B cell (primary cell): ENCODE measurements at regions of chr12 and their contacts with region 1.

Region 1: GRCh38 chr12:62259993-62260732 is at the start of gene USP15:
- DNase-seq: peak; percentile 98
- ATAC-seq: peak; percentile 82
- H3K4me3 ChIP-seq: peak within 1 kb of the TSS; percentile 81 to 99 (median 97)
- H3K4me3 Mint-ChIP-seq: peak within 1 kb of the TSS; percentile 96
- H3K27ac ChIP-seq: peak within 1 kb of the TSS; percentile 96
- H3K27ac Mint-ChIP-seq: peak within 1 kb of the TSS; percentile 98
- H3K4me1 ChIP-seq: peaks cover 34 to 44% of the 10 kb centered on the region in 2 donors
- H3K4me1 Mint-ChIP-seq: peaks cover 50% of the 10 kb centered on the region
- H3K27me3 ChIP-seq: no peaks in the 10 kb centered on the region
- H3K27me3 Mint-ChIP-seq: no peaks in the 10 kb centered on the region
- CTCF ChIP-seq: peak; percentile 61
- total RNA-seq, gene USP15: 171 and 182 TPM in 2 replicates

Region 2: GRCh38 chr12:62301080-62301798 is 41.1 kb after region 1 on chr12:
- CTCF ChIA-PET with region 1: no interaction called
- POLR2A ChIA-PET with region 1: interaction called, 3 read pairs
- intact Hi-C with region 1: loop called (anchors 5 kb)
- DNase-seq: no peak
- ATAC-seq: no peak
- H3K4me3 ChIP-seq: no peak overlapping the region
- H3K4me3 Mint-ChIP-seq: no peak overlapping the region
- H3K27ac ChIP-seq: no peak overlapping the region
- H3K27ac Mint-ChIP-seq: no peak overlapping the region
- H3K4me1 ChIP-seq: no peaks in the 10 kb centered on the region
- H3K4me1 Mint-ChIP-seq: peaks cover 41% of the 10 kb centered on the region
- H3K27me3 ChIP-seq: no peaks in the 10 kb centered on the region
- H3K27me3 Mint-ChIP-seq: no peaks in the 10 kb centered on the region
- CTCF ChIP-seq: no peak

Region 3: DNA sequence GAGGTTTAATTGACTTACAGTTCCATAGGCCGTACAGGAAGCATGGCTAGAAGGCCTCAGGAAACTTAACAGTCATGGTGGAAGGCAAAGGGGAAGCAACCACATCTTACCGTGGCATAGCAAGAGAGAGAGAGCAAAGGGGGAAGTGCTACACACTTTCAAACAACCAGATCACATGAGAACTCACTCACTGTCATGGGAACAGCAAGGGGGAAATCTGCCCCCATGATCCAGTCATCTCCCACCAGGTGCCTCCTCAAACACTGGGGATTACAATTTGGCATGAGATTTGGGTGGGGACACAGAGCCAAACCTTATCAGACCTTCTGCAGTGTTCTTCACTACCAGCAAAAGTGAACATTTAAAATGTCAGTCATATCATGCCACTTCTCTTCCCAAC is 58.9 kb after region 1 on chr12:
- CTCF ChIA-PET with region 1: no interaction called
- POLR2A ChIA-PET with region 1: no interaction called
- intact Hi-C with region 1: loop called (anchors 5 kb)
- DNase-seq: peak; percentile 44
- ATAC-seq: no peak
- H3K4me3 ChIP-seq: no peak overlapping the region
- H3K4me3 Mint-ChIP-seq: no peak overlapping the region
- H3K27ac ChIP-seq: peak overlapping the region in 1 of 2 donors; percentile 59
- H3K27ac Mint-ChIP-seq: peak overlapping the region; percentile 28
- H3K4me1 ChIP-seq: peaks cover 0 to 4% of the 10 kb centered on the region in 2 donors
- H3K4me1 Mint-ChIP-seq: peaks cover 28% of the 10 kb centered on the region
- H3K27me3 ChIP-seq: no peaks in the 10 kb centered on the region
- H3K27me3 Mint-ChIP-seq: no peaks in the 10 kb centered on the region
- CTCF ChIP-seq: no peak

Region 4: GRCh38 chr12:62351326-62351725 is 91.2 kb after region 1 on chr12:
- CTCF ChIA-PET with region 1: interaction called, 3 read pairs
- POLR2A ChIA-PET with region 1: no interaction called
- intact Hi-C with region 1: loop called (anchors 10 kb)
- DNase-seq: no peak
- ATAC-seq: no peak
- H3K4me3 ChIP-seq: no peak overlapping the region
- H3K4me3 Mint-ChIP-seq: no peak overlapping the region
- H3K27ac ChIP-seq: no peak overlapping the region
- H3K27ac Mint-ChIP-seq: no peak overlapping the region
- H3K4me1 ChIP-seq: no peaks in the 10 kb centered on the region
- H3K4me1 Mint-ChIP-seq: peaks cover 4% of the 10 kb centered on the region
- H3K27me3 ChIP-seq: no peaks in the 10 kb centered on the region
- H3K27me3 Mint-ChIP-seq: no peaks in the 10 kb centered on the region
- CTCF ChIP-seq: no peak

Region 5: DNA sequence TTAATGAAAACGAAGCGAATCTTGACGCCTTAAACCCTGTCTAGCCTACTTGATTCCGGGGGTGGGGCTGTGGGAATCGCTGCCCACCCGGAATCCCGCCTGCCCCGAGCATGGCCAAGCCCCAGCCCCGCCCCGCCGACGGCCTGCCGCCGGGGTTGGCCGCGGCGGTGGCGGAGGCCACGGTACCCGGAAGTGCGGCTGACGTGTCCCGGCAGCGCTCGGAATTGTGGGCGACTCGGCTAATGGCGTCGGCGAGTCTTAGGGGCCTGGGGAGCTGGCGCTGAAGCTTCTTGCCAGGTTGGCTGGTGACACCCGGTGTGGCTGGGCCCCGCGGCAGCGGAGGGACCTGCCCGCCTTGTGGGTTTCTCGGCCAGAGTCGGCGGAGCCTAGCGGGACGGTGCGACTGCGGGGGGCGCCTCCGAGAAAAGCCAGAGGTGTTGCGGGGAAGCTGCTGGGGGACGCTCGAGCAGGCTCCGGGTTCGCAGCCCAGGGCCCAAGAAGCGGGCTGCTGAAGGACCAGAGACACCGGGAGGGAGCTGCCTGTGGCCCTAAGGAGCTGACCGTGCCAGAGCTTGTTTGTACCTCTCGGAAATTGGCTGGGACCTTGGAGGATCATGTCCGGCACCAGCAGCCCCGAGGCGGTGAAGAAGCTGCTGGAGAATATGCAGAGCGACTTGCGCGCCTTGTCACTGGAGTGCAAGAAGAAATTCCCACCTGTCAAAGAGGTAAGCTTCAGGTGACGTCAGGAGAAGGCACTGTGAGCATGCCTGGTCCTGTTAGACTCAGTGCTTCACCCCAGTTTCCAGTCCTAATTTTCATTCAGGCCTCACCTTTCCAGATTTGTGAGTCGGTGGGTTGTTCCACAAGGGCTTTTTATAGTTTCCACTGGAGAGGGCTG is 206.7 kb after region 1 on chr12 and contains the start of gene MON2:
- CTCF ChIA-PET with region 1: interaction called, 3 read pairs
- POLR2A ChIA-PET with region 1: interaction called, 3 read pairs
- intact Hi-C with region 1: loop called (anchors 1 kb)
- DNase-seq: peak; percentile 90
- ATAC-seq: peak; percentile 97
- H3K4me3 ChIP-seq: peak within 1 kb of the TSS; percentile 70 to 95 (median 91)
- H3K4me3 Mint-ChIP-seq: peak within 1 kb of the TSS; percentile 97
- H3K27ac ChIP-seq: peak within 1 kb of the TSS; percentile 91 to 93
- H3K27ac Mint-ChIP-seq: peak within 1 kb of the TSS; percentile 86
- H3K4me1 ChIP-seq: peaks cover 23 to 25% of the 10 kb centered on the region in 2 donors
- H3K4me1 Mint-ChIP-seq: peaks cover 27% of the 10 kb centered on the region
- H3K27me3 ChIP-seq: no peaks in the 10 kb centered on the region
- H3K27me3 Mint-ChIP-seq: no peaks in the 10 kb centered on the region
- CTCF ChIP-seq: no peak
- total RNA-seq, gene MON2: 104 and 118 TPM in 2 replicates

Region 6: GRCh38 chr12:62793256-62794217 is 533.4 kb after region 1 on chr12:
- CTCF ChIA-PET with region 1: interaction called, 3 read pairs
- POLR2A ChIA-PET with region 1: no interaction called
- intact Hi-C with region 1: loop called (anchors 5 kb)
- DNase-seq: peak; percentile 80
- ATAC-seq: peak; percentile 70
- H3K4me3 ChIP-seq: no peak overlapping the region
- H3K4me3 Mint-ChIP-seq: no peak overlapping the region
- H3K27ac ChIP-seq: no peak overlapping the region
- H3K27ac Mint-ChIP-seq: no peak overlapping the region
- H3K4me1 ChIP-seq: no peaks in the 10 kb centered on the region
- H3K4me1 Mint-ChIP-seq: no peaks in the 10 kb centered on the region
- H3K27me3 ChIP-seq: no peaks in the 10 kb centered on the region
- H3K27me3 Mint-ChIP-seq: no peaks in the 10 kb centered on the region
- CTCF ChIP-seq: peak; percentile 97

Region 7: GRCh38 chr12:64222009-64222765 is 1962.0 kb after region 1 on chr12 and contains the start of gene KICS2:
- CTCF ChIA-PET with region 1: no interaction called
- POLR2A ChIA-PET with region 1: no interaction called
- intact Hi-C with region 1: loop called (anchors 5 kb)
- DNase-seq: peak; percentile 98
- ATAC-seq: peak; percentile 86
- H3K4me3 ChIP-seq: peak within 1 kb of the TSS; percentile 58 to 89 (median 80)
- H3K4me3 Mint-ChIP-seq: peak within 1 kb of the TSS; percentile 93
- H3K27ac ChIP-seq: peak within 1 kb of the TSS; percentile 92 to 97
- H3K27ac Mint-ChIP-seq: peak within 1 kb of the TSS; percentile 96
- H3K4me1 ChIP-seq: peaks cover 10 to 20% of the 10 kb centered on the region in 2 donors
- H3K4me1 Mint-ChIP-seq: peaks cover 31% of the 10 kb centered on the region
- H3K27me3 ChIP-seq: peaks cover 0 to 3% (median 0%) of the 10 kb centered on the region in 4 experiments
- H3K27me3 Mint-ChIP-seq: peaks cover 8% of the 10 kb centered on the region
- CTCF ChIP-seq: no peak
- total RNA-seq, gene KICS2: 18.7 and 21.2 TPM in 2 replicates